HepG2 (cell line): ENCODE measurements at regions of chr19 and their contacts with region 1.

Region 1: DNA sequence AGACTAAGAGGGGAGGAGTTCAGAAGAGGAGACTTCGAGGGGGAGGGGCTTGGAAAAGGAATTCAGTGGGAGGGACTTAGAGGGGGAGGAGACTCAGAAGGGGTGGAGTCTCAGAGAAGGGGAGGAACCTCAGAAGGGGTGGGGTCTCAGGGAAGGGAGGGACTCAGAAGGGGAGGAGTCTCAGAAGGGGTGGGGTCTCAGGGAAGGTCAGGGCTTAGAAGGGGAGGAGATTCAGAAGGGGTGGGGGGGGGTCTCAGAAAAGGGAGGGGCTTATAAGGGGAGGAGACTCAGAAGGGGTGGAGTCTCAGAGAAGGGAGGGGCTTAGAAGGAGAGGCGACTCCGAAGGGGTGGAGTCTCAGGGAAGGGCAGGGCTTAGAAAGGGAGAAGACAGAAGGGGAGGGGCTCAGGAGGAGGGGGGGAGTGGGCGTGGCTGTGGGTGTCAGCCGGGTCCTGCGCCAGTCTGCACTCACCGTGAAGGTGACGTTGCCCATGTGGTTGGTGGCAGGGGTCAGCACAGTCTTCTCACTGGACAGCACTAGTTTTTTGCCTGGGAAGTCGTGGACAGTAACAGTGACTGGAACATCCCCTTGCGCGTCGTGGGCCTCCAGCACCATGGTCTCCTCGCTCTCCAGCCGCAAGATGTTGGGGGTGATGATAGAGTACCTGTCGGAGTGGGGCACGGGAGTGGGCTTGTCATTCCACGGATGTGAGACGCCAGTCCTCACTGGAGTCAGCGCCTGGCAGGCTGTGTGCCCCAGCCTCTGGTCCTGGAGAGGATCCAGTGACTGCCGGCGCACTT is 1.5 kb downstream of the C3 start:
- DNase-seq: peak; percentile 93
- ATAC-seq: peak; percentile 69
- H3K4me3 ChIP-seq: peak overlapping the region; percentile 70 to 100 (median 89)
- H3K27ac ChIP-seq: peak overlapping the region; percentile 90
- H3K4me1 ChIP-seq: peaks cover 60% of the 10 kb centered on the region
- H3K27me3 ChIP-seq: peaks cover 0 to 7% of the 10 kb centered on the region in 2 experiments; a peak in 1 of 5 replicates
- CTCF ChIP-seq: no peak; the same call in 1 of the 2 replicates
- EP300 ChIP-seq: no peak
- POLR2A ChIP-seq: peak; percentile 85 to 88; a peak in 3 of 4 replicates
- RAD21 ChIP-seq: peak; percentile 35; the same call in 1 of the 2 replicates

Region 2: DNA sequence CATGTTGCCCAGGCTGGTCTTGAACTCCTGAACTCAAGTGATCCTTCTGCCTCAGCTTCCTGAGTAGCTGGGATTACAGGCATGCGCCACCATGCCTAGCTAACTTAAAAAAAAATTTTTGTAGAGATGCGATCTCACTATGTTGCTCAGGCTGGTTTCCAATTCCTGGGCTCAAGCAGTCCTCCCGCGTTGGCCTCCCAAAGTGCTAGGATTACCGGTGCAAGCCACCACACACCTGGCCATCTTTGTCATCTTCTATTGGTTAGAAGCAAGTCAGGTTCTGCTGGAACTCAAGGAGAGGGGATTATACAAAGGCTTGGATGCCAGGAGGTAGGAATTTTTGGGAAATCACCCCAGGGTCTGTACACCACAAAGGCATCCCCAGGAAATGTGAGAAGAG is 74.1 kb before region 1 on chr19:
- CTCF ChIA-PET with region 1: no interaction called
- POLR2A ChIA-PET with region 1: no interaction called
- in situ Hi-C with region 1: no loop called
- intact Hi-C with region 1: no loop called
- DNase-seq: no peak
- ATAC-seq: no peak
- H3K4me3 ChIP-seq: no peak overlapping the region
- H3K27ac ChIP-seq: no peak overlapping the region
- H3K4me1 ChIP-seq: no peaks in the 10 kb centered on the region
- H3K27me3 ChIP-seq: peaks cover 0 to 10% of the 10 kb centered on the region in 2 experiments; a peak in 3 of 5 replicates
- CTCF ChIP-seq: no peak
- EP300 ChIP-seq: no peak
- POLR2A ChIP-seq: no peak
- RAD21 ChIP-seq: no peak

Region 3: GRCh38 chr19:6705931-6706632 is 12.9 kb before region 1 on chr19:
- CTCF ChIA-PET with region 1: no interaction called
- POLR2A ChIA-PET with region 1: interaction called, 11 read pairs
- in situ Hi-C with region 1: no loop called
- intact Hi-C with region 1: no loop called
- DNase-seq: no peak
- ATAC-seq: peak; percentile 16
- H3K4me3 ChIP-seq: no peak overlapping the region
- H3K27ac ChIP-seq: no peak overlapping the region
- H3K4me1 ChIP-seq: 0 out of 2 replicates have a peak, but pooled peaks cover 10% of the 10 kb centered on the region
- H3K27me3 ChIP-seq: no peaks in the 10 kb centered on the region
- CTCF ChIP-seq: no peak
- EP300 ChIP-seq: no peak
- POLR2A ChIP-seq: peak in 1 of 2 experiments; percentile 46; a peak in 1 of 4 replicates
- RAD21 ChIP-seq: no peak

Region 4: DNA sequence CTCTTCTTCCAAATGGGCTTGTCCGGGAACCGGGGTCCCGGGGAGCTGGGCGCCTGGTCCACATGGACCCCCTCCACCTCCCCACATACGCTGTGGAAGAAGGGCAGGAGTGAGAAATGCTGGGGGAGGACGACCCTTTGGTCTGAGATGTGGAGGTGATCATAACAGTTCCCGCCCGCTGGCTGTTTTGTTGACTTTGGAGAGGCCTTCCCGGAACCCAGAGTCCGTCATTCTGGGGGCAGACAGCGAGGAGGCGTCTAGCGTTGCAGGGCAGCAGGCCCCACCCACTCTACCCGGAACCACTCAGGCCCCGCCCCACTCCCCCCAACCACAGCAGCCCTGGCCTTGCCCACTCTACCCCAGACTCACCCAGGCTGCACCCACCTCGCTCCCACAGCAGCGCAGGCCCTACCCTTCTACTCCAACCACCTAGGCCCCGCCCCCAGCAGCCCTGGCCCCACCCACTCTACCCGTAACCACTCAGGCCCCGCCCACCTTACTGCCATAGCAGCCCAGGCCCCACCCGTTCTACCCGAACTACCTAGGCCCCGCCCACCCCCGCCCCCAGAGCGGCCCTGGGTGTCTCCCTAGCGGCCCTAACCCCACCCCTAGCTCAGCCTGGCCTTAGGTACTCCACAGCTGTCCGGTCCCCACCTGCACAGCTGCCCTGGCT is 11.3 kb after region 1 on chr19:
- CTCF ChIA-PET with region 1: no interaction called
- POLR2A ChIA-PET with region 1: interaction called, 278 read pairs
- in situ Hi-C with region 1: no loop called
- intact Hi-C with region 1: loop called (anchors 1 kb)
- DNase-seq: peak; percentile 96
- ATAC-seq: peak; percentile 85
- H3K4me3 ChIP-seq: peak overlapping the region; percentile 48 to 70 (median 63); a peak in 5 of 6 replicates
- H3K27ac ChIP-seq: peak overlapping the region; percentile 99
- H3K4me1 ChIP-seq: peaks cover 71% of the 10 kb centered on the region
- H3K27me3 ChIP-seq: no peaks in the 10 kb centered on the region
- CTCF ChIP-seq: no peak
- EP300 ChIP-seq: peak in 1 of 2 experiments; percentile 73; a peak in 2 of 4 replicates
- POLR2A ChIP-seq: peak; percentile 34 to 76; a peak in 3 of 4 replicates
- RAD21 ChIP-seq: 0 out of 2 replicates have a peak, but pooled peaks have one; percentile 24

Region 5: GRCh38 chr19:6737284-6738046 is 18.5 kb after region 1 on chr19 and contains the start of gene GPR108:
- CTCF ChIA-PET with region 1: no interaction called
- POLR2A ChIA-PET with region 1: interaction called, 278 read pairs
- in situ Hi-C with region 1: no loop called
- intact Hi-C with region 1: loop called (anchors 2 kb)
- DNase-seq: peak; percentile 100
- ATAC-seq: peak; percentile 72
- H3K4me3 ChIP-seq: peak within 1 kb of the TSS; percentile 82 to 100 (median 90)
- H3K27ac ChIP-seq: peak within 1 kb of the TSS; percentile 89
- H3K4me1 ChIP-seq: peaks cover 56% of the 10 kb centered on the region
- H3K27me3 ChIP-seq: no peaks in the 10 kb centered on the region; a peak in 1 of 5 replicates
- CTCF ChIP-seq: 0 out of 2 replicates have a peak, but pooled peaks have one; percentile 13
- EP300 ChIP-seq: no peak
- POLR2A ChIP-seq: peak; percentile 56 to 67; a peak in 3 of 4 replicates
- RAD21 ChIP-seq: peak; percentile 49; the same call in 1 of the 2 replicates
- total RNA-seq, gene GPR108: 24.1 and 36.4 TPM in 2 replicates